ENCODE measurements at regions of chrX and their contacts with region 1.

Region 1: GRCh38 chrX:9708904-9709553 is 56.6 kb downstream of the GPR143 start:
- DNase-seq: peak; percentile 58 to 72
- H3K4me3 ChIP-seq: no peak overlapping the region
- H3K27ac ChIP-seq: 0 out of 2 replicates have a peak overlapping the region, but pooled peaks have one; percentile 12
- H3K4me1 ChIP-seq: peaks cover 13% of the 10 kb centered on the region
- H3K27me3 ChIP-seq: no peaks in the 10 kb centered on the region
- CTCF ChIP-seq: peak; percentile 84

Region 2: DNA sequence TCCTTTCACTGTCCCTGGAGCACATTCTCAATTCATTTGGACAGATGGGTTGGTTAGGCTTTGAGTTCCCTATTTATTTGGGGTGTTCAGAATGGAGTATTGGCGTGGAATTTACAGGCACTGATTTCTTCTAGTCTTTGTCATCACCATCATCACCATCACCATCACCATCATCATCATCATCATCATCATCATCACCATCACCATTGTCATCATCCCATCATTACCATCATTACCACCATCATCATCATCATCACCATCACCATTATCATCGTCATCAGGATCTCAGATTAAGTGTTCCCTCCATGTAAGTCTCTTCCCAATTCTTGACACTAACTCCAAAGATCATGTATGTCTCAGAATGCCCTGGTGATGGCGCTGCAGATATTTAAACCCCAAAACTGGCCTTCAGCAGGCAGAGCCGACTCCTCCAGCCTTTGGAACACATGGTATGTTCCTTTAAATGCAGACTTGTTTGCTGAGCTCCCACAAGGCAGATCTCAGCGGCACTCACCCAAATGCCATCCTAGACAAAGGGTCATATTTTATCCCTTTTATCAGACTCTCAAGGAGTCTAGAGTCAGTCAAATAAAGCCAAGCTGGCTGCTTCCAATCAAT is 888.0 kb before region 1 on chrX:
- CTCF ChIA-PET with region 1: no interaction called
- POLR2A ChIA-PET with region 1: no interaction called
- intact Hi-C with region 1: loop called (anchors 2 kb)
- DNase-seq: peak in 1 of 2 experiments; percentile 36
- H3K4me3 ChIP-seq: no peak overlapping the region
- H3K27ac ChIP-seq: no peak overlapping the region
- H3K4me1 ChIP-seq: peaks cover 3% of the 10 kb centered on the region; the same call in 1 of the 2 replicates
- H3K27me3 ChIP-seq: no peaks in the 10 kb centered on the region
- CTCF ChIP-seq: peak; percentile 26; the same call in 1 of the 2 replicates

Region 3: GRCh38 chrX:8971116-8971515 is 737.9 kb before region 1 on chrX:
- CTCF ChIA-PET with region 1: interaction called, 3 read pairs
- POLR2A ChIA-PET with region 1: no interaction called
- intact Hi-C with region 1: loop called (anchors 5 kb)
- DNase-seq: peak in 1 of 2 experiments; percentile 37
- H3K4me3 ChIP-seq: no peak overlapping the region
- H3K27ac ChIP-seq: no peak overlapping the region
- H3K4me1 ChIP-seq: no peaks in the 10 kb centered on the region
- H3K27me3 ChIP-seq: no peaks in the 10 kb centered on the region
- CTCF ChIP-seq: peak; percentile 67

Region 4: GRCh38 chrX:9464435-9465371 is 244.3 kb before region 1 on chrX and contains the start of gene TBL1X:
- CTCF ChIA-PET with region 1: no interaction called
- POLR2A ChIA-PET with region 1: no interaction called
- intact Hi-C with region 1: loop called (anchors 5 kb)
- DNase-seq: peak in 1 of 2 experiments; percentile 59
- H3K4me3 ChIP-seq: peak within 1 kb of the TSS; percentile 73
- H3K27ac ChIP-seq: peak within 1 kb of the TSS; percentile 95
- H3K4me1 ChIP-seq: peaks cover 21% of the 10 kb centered on the region
- H3K27me3 ChIP-seq: no peaks in the 10 kb centered on the region
- CTCF ChIP-seq: no peak
- total RNA-seq, gene TBL1X: 14.9 and 17.6 TPM in 2 replicates

Region 5: GRCh38 chrX:9582956-9583355 is 126.1 kb before region 1 on chrX:
- CTCF ChIA-PET with region 1: no interaction called
- POLR2A ChIA-PET with region 1: no interaction called
- intact Hi-C with region 1: no loop called
- DNase-seq: no peak
- H3K4me3 ChIP-seq: no peak overlapping the region
- H3K27ac ChIP-seq: no peak overlapping the region
- H3K4me1 ChIP-seq: no peaks in the 10 kb centered on the region
- H3K27me3 ChIP-seq: no peaks in the 10 kb centered on the region
- CTCF ChIP-seq: no peak

Region 6: DNA sequence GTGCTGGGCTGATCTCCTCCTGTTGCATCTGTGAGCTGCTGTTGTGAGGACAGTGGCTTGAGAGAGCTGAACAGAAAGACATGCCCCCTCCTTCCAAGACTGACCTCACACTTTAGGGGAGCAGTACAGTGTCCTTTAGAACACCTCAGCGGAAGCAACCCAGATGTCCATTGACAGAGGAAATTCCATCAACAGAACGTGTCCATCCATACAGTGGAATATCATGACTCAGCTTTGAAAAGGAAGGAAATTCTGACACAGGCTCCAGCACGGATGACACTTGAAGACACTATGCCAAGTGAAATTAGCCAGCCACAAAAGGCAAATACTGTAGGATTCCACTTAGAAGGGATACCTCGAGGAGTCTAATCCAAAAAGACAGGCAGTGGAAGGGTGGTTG is 46.9 kb before region 1 on chrX:
- CTCF ChIA-PET with region 1: no interaction called
- POLR2A ChIA-PET with region 1: no interaction called
- intact Hi-C with region 1: no loop called
- DNase-seq: no peak
- H3K4me3 ChIP-seq: no peak overlapping the region
- H3K27ac ChIP-seq: no peak overlapping the region
- H3K4me1 ChIP-seq: no peaks in the 10 kb centered on the region
- H3K27me3 ChIP-seq: no peaks in the 10 kb centered on the region
- CTCF ChIP-seq: no peak

Region 7: DNA sequence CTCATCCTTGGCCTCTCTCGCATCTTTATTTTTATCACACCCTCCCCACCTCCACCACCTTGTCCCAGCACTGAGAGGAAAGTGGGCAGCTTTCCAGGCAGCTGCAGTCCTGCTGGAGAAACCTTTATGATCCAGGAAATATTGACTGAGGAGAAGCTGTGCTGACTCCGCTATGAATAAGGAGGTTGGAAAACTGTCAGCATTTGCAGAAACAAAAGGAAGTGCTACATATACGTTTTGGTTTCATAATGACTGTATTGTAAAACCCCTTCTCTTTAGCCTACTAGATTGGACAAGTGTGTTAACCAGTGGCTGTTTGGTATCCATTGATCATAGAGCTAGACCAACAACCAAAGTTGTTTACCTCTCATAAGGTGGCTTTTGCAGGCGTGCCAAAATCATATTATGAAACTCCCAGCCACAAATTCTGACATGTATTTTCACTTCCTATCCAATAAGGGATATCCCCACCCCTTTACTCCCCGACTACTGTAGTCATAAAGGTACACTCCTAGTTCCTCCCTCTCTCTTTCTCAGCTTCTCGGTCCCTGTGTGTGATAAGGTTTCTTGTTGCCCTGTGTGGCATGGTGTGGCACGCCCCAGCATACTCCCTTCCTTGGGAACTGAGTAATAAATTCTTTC is 31.8 kb before region 1 on chrX:
- CTCF ChIA-PET with region 1: no interaction called
- POLR2A ChIA-PET with region 1: no interaction called
- intact Hi-C with region 1: no loop called
- DNase-seq: no peak
- H3K4me3 ChIP-seq: no peak overlapping the region
- H3K27ac ChIP-seq: no peak overlapping the region
- H3K4me1 ChIP-seq: no peaks in the 10 kb centered on the region
- H3K27me3 ChIP-seq: no peaks in the 10 kb centered on the region
- CTCF ChIP-seq: no peak

Region 8: GRCh38 chrX:11129534-11130105 is 1420.6 kb after region 1 on chrX:
- CTCF ChIA-PET with region 1: no interaction called
- POLR2A ChIA-PET with region 1: no interaction called
- intact Hi-C with region 1: no loop called
- DNase-seq: no peak
- H3K4me3 ChIP-seq: no peak overlapping the region
- H3K27ac ChIP-seq: no peak overlapping the region
- H3K4me1 ChIP-seq: no peaks in the 10 kb centered on the region
- H3K27me3 ChIP-seq: no peaks in the 10 kb centered on the region
- CTCF ChIP-seq: no peak